Right ventricle myocardium inferior (tissue), 1 donor: ENCODE measurements at regions of chr4 and their contacts with region 1.

Region 1: GRCh38 chr4:39044364-39044955 is 12.3 kb upstream of the TMEM156 start:
- DNase-seq: peak; percentile 96
- ATAC-seq: peak; percentile 94

Region 2: DNA sequence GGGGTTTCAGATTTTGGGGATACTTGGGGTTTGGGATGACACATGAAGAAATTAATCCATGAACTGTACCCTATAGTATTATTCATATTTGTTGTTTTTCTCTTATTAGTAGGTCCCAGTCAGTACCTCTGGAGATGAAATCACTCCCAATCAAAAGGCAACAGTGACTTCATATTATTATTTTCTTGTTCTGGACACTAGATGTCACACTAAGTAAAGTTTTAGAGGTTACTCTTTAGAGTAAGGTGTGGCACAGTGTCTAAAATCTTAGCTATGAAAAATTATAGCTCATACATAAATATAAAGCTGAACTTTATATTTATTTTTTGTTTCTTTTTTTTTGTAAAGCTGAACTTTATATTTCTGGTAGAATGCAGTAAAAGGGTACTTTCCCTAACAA is 141.8 kb before region 1 on chr4:
- intact Hi-C with region 1: loop called (anchors 10 kb)
- DNase-seq: no peak
- ATAC-seq: peak; percentile 61

Region 3: DNA sequence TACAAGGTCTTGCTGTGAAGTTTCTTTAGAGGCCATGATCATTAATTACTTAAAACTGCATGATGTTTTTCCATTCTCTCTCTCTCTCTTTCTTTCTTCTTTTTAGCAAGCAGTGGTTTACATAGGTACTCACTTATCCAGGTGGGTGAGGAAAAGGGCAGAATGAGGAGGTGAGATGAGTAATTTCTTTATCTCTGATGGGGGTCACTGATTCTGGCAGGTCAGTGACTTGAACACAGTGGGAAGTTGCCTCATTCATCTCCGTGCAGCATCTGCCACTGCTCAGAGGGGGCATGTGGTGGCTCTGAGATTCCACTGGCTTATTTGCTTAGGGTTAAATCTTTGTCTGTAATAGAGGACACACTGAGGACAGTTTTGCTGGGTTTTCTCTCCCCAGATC is 114.3 kb before region 1 on chr4:
- intact Hi-C with region 1: no loop called
- DNase-seq: no peak
- ATAC-seq: no peak

Region 4: DNA sequence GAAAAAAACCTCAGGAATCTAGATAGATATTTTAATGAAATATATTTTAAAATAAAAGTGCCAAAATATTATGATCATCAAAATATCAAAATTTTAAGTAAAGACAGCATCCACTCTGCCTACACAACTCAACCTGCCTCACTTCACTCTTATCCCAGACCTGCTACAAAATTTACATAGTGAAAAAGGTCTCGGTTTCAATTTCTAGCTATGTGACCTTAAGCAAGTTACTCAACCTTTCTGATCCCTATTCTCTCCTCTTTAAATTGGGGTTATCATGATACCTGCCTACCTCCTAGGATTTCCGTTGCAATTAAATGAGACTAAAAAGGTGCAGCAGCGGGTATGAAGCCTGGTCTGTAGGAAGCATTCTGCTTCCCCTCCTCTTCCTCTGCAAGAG is 104.0 kb before region 1 on chr4:
- intact Hi-C with region 1: loop called (anchors 2 kb)
- DNase-seq: no peak
- ATAC-seq: no peak